Activated CD4-positive, alpha-beta T cell treated with anti-CD3 and anti-CD28 coated beads, Interleukin-2, amount 10 ng/mL, durations not matched to agents 7 days and 5 days (primary cell): ENCODE measurements at regions of chr12 and their contacts with region 1.

Region 1: DNA sequence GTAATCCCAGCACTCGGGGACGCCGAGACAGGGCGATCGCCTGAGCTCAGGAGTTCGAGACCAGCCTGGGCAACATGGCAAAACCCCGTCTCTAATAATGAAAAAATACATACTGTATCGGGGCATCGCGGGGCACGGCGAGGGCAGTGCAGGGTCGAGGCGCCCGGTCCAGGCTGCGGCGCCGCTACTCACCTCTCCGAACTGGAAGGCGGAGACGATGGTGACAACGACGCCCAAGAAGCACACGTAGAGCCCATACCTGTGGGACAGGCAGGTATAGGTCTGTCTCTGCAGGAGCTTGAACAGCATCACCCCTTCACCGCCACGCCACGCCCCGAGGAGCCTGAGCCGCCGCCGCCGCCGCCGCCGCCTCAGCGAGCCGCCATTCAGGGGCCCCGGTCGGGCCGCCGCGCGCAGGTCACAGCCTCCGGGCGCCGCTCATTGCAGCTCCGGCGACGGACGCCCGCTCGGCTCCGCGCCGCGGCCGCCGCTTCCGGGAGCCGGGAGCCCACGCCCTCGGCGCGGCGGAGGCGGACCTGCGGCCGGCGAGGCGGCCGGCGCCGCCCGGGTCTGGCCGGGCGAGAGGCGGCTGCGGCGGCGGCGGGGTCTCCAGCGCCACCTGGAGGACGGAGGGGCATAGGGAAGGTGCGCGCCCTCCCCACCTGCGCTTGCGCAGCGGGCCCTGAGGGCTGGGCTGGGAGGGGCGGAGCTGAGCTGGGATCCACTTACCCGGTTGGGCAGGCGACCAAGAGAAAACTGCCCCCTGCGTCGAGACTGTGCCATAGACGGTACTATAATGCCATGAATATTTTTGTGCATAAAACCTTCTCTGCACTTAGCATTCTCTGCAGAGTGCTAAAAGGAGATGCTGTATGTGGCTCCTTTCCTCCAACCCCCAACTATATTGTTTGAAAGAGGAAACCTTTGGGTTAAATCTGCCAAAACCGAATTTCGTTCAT is at the start of gene GNPTAB:
- DNase-seq: peak; percentile 95
- H3K4me3 Mint-ChIP-seq: peak within 1 kb of the TSS; percentile 99
- H3K27ac Mint-ChIP-seq: peak within 1 kb of the TSS; percentile 97
- H3K4me1 Mint-ChIP-seq: peaks cover 46% of the 10 kb centered on the region
- H3K27me3 Mint-ChIP-seq: no peaks in the 10 kb centered on the region
- total RNA-seq, gene GNPTAB: 57.4 to 68.7 TPM

Region 2: DNA sequence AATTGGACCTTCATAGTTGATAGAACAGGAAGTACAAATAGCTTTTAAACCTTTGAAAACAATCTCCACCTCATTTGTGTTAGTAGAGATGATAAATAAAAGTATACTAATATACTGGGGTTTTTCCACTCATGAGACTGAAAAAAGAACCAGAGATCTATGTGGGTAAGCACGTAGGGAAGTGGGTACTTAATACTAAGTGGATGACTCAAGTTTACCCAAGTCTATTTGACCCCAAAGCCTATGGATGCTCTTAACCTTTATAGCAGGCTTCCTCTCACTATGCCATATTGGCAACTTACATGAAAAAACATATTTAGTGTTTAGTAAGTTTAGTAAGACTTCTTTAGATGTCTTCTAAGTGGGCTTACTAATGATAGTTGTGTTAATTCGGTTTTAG is 182.5 kb before region 1 on chr12:
- CTCF ChIA-PET with region 1: no interaction called
- POLR2A ChIA-PET with region 1: no interaction called
- DNase-seq: no peak
- H3K4me3 Mint-ChIP-seq: no peak overlapping the region
- H3K27ac Mint-ChIP-seq: no peak overlapping the region
- H3K4me1 Mint-ChIP-seq: no peaks in the 10 kb centered on the region
- H3K27me3 Mint-ChIP-seq: peaks cover 39% of the 10 kb centered on the region

Region 3: DNA sequence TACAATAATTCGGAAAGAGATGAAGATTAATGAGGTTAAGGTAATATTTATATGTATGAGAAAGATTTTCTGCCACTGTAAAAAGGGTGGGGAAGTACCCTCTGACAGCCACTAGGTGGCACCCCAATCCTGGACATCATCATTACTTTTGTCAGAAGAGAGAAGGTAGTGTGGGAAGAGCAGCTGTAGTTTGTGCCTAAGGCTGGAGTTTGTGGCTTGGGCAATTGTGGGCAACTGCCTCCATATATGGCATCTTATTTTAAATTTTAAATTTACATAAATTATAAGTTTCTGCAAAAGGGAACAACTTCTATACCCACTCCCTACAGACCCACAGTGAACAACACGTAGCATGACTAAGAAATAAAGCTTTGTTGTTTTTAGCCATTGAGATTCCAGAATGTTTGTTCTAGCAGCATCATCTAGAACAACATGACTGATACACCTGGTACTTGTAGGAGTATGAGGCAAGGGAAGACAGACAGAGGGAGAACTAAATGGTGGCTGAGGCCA is 56.9 kb before region 1 on chr12:
- CTCF ChIA-PET with region 1: interaction called, 61 read pairs
- POLR2A ChIA-PET with region 1: interaction called, 5 read pairs
- DNase-seq: peak; percentile 77
- H3K4me3 Mint-ChIP-seq: no peak overlapping the region
- H3K27ac Mint-ChIP-seq: no peak overlapping the region
- H3K4me1 Mint-ChIP-seq: peaks cover 27% of the 10 kb centered on the region
- H3K27me3 Mint-ChIP-seq: no peaks in the 10 kb centered on the region

Region 4: GRCh38 chr12:101782273-101782731 is 48.3 kb before region 1 on chr12:
- CTCF ChIA-PET with region 1: interaction called, 61 read pairs
- POLR2A ChIA-PET with region 1: interaction called, 3 read pairs
- DNase-seq: no peak
- H3K4me3 Mint-ChIP-seq: no peak overlapping the region
- H3K27ac Mint-ChIP-seq: peak overlapping the region; percentile 61
- H3K4me1 Mint-ChIP-seq: peaks cover 26% of the 10 kb centered on the region
- H3K27me3 Mint-ChIP-seq: no peaks in the 10 kb centered on the region

Region 5: DNA sequence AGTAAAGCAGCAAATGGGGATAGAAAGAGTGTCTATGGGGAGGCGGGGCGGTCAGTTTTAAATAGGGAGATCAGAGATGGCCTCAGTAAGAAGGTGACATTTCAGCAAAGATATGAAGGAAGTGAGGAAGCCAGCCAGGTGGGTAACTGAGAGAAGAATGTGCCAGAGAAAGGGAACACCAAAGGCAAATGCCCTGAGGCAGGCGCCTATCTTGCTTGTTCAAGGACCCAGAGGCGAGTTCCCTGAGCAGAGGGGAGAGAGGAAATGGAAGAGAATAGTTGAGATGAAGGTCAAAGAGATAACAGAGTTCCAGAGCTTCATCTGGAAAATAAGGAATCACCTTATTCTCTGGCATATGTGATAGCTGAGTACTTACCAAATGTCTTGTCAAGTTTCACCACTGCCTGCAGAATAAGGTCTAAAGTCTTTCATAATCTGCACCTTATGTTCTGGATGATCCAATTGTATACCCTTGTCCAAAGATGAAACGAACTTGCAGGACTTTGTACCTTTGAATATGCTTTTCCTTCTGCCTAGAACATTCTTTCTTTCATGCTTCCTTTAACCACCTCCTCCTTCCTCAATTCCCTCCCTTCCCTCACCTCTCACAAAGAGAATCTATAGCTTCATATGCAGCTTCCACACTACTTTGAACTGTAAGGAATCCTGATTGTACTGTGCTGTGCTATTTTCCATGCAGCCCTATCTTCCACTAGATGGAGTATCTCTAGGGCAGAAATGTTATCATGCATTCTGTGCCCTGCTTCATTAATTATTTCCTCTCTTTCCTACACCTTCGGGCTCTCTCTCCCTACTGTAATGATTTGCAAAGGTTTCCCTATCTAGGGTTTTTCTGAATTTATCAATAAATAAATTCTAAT is 38.4 kb before region 1 on chr12:
- CTCF ChIA-PET with region 1: interaction called, 34 read pairs
- POLR2A ChIA-PET with region 1: no interaction called
- DNase-seq: no peak
- H3K4me3 Mint-ChIP-seq: no peak overlapping the region
- H3K27ac Mint-ChIP-seq: peak overlapping the region; percentile 55
- H3K4me1 Mint-ChIP-seq: peaks cover 51% of the 10 kb centered on the region
- H3K27me3 Mint-ChIP-seq: no peaks in the 10 kb centered on the region

Region 6: GRCh38 chr12:101813117-101813516 is 17.5 kb before region 1 on chr12:
- CTCF ChIA-PET with region 1: interaction called, 59 read pairs
- POLR2A ChIA-PET with region 1: no interaction called
- DNase-seq: no peak
- H3K4me3 Mint-ChIP-seq: no peak overlapping the region
- H3K27ac Mint-ChIP-seq: no peak overlapping the region
- H3K4me1 Mint-ChIP-seq: peaks cover 27% of the 10 kb centered on the region
- H3K27me3 Mint-ChIP-seq: no peaks in the 10 kb centered on the region

Region 7: DNA sequence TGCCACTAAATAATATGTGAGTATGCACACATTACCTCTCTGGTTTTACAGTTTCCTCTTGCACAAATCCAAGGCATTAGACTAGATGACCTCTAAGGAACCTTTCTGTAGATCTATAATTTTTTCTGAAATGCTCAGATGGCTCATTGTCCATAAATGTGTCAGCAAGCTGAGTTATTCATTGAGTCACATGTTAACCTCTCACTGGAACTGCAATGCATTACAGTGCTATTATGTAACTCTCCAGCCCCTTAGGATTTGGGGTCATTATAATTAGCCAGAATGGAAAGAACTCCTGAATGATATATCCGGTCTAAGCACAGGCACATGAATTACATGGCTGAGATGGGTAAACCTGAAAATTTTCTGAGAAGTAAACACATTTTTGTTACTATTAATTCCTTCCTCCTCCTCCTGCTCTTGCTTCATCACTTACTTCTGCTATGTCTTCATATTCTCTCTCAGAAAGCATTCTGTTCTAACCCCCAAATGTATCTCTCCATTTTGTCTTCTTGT is 26.5 kb after region 1 on chr12:
- CTCF ChIA-PET with region 1: no interaction called
- POLR2A ChIA-PET with region 1: no interaction called
- DNase-seq: no peak
- H3K4me3 Mint-ChIP-seq: no peak overlapping the region
- H3K27ac Mint-ChIP-seq: no peak overlapping the region
- H3K4me1 Mint-ChIP-seq: peaks cover 6% of the 10 kb centered on the region
- H3K27me3 Mint-ChIP-seq: no peaks in the 10 kb centered on the region

Region 8: GRCh38 chr12:101902641-101903040 is 72.0 kb after region 1 on chr12:
- CTCF ChIA-PET with region 1: no interaction called
- POLR2A ChIA-PET with region 1: no interaction called
- DNase-seq: no peak
- H3K4me3 Mint-ChIP-seq: no peak overlapping the region
- H3K27ac Mint-ChIP-seq: no peak overlapping the region
- H3K4me1 Mint-ChIP-seq: no peaks in the 10 kb centered on the region
- H3K27me3 Mint-ChIP-seq: no peaks in the 10 kb centered on the region